HepG2 (cell line): ENCODE measurements at regions of chr6 and their contacts with region 1.

Region 1: GRCh38 chr6:13328076-13328874 is at the start of gene TBC1D7:
- DNase-seq: peak; percentile 92
- ATAC-seq: peak; percentile 92
- H3K4me3 ChIP-seq: peak within 1 kb of the TSS; percentile 72 to 92 (median 90)
- H3K27ac ChIP-seq: peak within 1 kb of the TSS; percentile 81
- H3K4me1 ChIP-seq: peaks cover 45% of the 10 kb centered on the region
- H3K27me3 ChIP-seq: peaks cover 0 to 4% of the 10 kb centered on the region in 2 experiments; a peak in 2 of 5 replicates
- CTCF ChIP-seq: peak; percentile 28
- EP300 ChIP-seq: no peak
- POLR2A ChIP-seq: peak; percentile 74 to 94
- RAD21 ChIP-seq: peak; percentile 22; the same call in 1 of the 2 replicates
- total RNA-seq, gene TBC1D7: 23.3 and 28.5 TPM in 2 replicates

Region 2: DNA sequence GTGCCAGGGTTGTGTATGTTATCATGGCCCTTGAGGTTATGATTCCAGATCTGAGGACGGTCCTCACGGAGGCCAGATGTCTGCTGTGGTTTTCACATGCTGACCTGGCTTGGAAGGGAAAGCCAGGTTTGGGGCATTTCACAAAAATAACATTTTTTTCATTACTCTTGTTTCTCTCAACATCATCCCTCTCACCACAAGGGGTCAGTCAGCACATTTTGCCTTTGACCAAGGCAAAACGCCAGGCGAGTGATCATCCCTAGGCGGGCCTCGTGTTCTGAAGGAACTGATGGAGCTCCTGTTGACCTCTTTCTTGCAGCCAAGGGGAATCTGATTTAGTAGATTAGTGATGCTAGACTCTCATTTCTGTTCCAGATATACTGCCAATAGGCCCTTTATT is 133.4 kb before region 1 on chr6:
- CTCF ChIA-PET with region 1: interaction called, 26 read pairs
- POLR2A ChIA-PET with region 1: interaction called, 5 read pairs
- in situ Hi-C with region 1: loop called (anchors 10 kb)
- intact Hi-C with region 1: loop called (anchors 1 kb)
- DNase-seq: peak; percentile 64
- ATAC-seq: peak; percentile 87
- H3K4me3 ChIP-seq: no peak overlapping the region
- H3K27ac ChIP-seq: no peak overlapping the region
- H3K4me1 ChIP-seq: peaks cover 2% of the 10 kb centered on the region; the same call in 1 of the 2 replicates
- H3K27me3 ChIP-seq: 0 out of 5 replicates have a peak, but pooled peaks cover 0 to 12% of the 10 kb centered on the region in 2 experiments
- CTCF ChIP-seq: peak; percentile 79
- EP300 ChIP-seq: no peak
- POLR2A ChIP-seq: no peak
- RAD21 ChIP-seq: peak; percentile 63

Region 3: DNA sequence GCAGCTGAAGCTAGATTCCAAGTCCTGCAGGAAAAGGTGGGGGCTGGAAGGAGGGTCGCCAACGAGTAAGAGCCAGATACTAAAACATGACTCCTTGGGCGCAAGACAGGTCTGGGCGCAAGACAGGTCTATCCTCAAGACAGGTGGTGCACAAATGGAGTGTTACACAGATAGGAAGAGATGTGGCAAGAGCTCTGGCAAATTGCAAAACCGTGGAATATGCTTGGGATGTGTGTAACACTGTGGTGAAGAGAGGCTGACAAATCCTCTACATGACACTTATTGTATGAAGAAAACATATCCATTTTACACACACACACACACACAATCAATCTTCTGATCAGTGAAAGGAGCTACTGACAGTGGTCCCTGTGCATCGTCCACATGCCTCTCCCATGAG is 77.6 kb before region 1 on chr6:
- CTCF ChIA-PET with region 1: no interaction called
- POLR2A ChIA-PET with region 1: interaction called, 6 read pairs
- in situ Hi-C with region 1: no loop called
- intact Hi-C with region 1: loop called (anchors 2 kb)
- DNase-seq: no peak
- ATAC-seq: peak; percentile 59
- H3K4me3 ChIP-seq: no peak overlapping the region
- H3K27ac ChIP-seq: no peak overlapping the region
- H3K4me1 ChIP-seq: peaks cover 30% of the 10 kb centered on the region
- H3K27me3 ChIP-seq: no peaks in the 10 kb centered on the region
- CTCF ChIP-seq: no peak
- EP300 ChIP-seq: no peak
- POLR2A ChIP-seq: no peak
- RAD21 ChIP-seq: no peak

Region 4: GRCh38 chr6:13302751-13303667 is 25.3 kb before region 1 on chr6:
- CTCF ChIA-PET with region 1: no interaction called
- POLR2A ChIA-PET with region 1: interaction called, 14 read pairs
- in situ Hi-C with region 1: no loop called
- intact Hi-C with region 1: no loop called
- DNase-seq: peak; percentile 80
- ATAC-seq: peak; percentile 42
- H3K4me3 ChIP-seq: no peak overlapping the region
- H3K27ac ChIP-seq: peak overlapping the region; percentile 44
- H3K4me1 ChIP-seq: peaks cover 45% of the 10 kb centered on the region
- H3K27me3 ChIP-seq: no peaks in the 10 kb centered on the region
- CTCF ChIP-seq: no peak
- EP300 ChIP-seq: peak in 1 of 2 experiments; percentile 50; a peak in 1 of 4 replicates
- POLR2A ChIP-seq: no peak
- RAD21 ChIP-seq: no peak

Region 5: DNA sequence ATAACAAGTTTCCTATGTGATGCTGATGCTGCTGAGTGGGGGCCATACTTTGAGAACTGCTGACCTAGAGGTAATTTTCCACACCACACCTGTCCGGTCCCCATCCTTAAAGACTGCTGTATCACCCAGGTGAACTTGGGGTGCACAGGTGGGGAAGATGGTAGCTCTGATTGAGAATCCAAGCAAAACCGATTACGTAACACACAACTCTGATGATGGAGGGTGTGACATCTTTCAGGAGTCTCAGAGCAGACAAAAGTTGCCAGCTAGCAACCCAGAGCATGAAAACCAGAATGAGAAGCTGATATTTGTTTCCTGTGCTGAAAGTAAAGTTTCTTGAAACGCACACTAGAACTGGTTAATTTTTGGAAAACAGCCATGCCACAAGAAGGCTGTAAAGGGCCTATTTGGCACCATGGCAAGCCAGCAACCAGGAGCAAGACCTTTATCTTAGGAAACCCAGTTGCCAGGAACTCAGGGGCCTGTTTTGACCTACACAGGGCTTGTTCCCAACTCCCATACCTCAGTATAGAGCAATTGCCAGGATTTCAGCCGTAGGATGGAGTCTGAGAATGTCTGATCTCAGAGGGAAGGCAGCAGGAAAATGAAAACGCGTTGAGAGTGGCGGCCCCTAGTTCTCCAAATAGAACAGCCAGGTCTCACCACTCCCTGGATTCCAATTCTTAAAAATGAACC is 21.7 kb after region 1 on chr6:
- CTCF ChIA-PET with region 1: no interaction called
- POLR2A ChIA-PET with region 1: no interaction called
- in situ Hi-C with region 1: no loop called
- intact Hi-C with region 1: no loop called
- DNase-seq: no peak
- ATAC-seq: no peak
- H3K4me3 ChIP-seq: no peak overlapping the region
- H3K27ac ChIP-seq: no peak overlapping the region
- H3K4me1 ChIP-seq: peaks cover 9% of the 10 kb centered on the region
- H3K27me3 ChIP-seq: no peaks in the 10 kb centered on the region; a peak in 1 of 5 replicates
- CTCF ChIP-seq: no peak
- EP300 ChIP-seq: no peak
- POLR2A ChIP-seq: no peak
- RAD21 ChIP-seq: no peak

Region 6: DNA sequence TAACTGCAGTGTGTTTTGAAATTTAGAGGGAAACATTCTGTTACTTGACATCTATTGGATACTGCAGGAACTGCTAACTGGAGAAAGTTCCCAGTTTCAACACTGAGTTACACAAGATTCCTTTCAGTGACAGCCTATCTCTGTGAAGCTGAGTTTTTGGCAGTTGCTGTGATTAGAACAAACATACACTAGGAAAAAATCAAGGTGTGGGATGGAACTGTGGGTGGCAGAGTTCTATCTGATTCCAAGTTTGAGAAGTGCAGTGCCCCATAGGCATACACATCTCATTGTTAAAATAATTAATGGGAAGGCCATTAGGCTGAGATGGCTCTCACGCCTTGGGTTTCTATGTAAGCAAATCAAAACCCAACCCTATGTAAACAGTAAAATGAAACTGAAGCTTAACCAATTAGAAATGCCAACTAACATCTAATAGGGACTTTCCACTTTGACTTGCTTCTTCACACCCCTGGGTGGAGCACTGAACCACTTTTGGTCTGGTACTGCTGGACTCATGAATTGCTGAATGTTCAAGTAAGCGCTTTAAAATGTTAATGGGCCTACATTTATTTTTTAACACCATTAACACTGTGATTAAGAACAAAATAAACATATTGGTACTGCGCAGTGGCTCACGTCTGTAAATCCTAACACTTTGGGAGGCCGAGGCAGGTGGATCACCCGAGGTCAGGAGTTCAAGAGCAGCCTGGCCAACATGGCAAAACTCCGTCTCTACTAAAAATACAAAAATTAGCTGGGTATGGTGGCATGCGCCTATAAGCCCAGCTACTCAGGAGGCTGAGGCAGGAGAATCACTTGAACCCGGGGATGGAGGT is 55.3 kb after region 1 on chr6:
- CTCF ChIA-PET with region 1: no interaction called
- POLR2A ChIA-PET with region 1: no interaction called
- in situ Hi-C with region 1: no loop called
- intact Hi-C with region 1: no loop called
- DNase-seq: peak; percentile 21
- ATAC-seq: peak; percentile 56; the same call in 2 of the 3 replicates
- H3K4me3 ChIP-seq: no peak overlapping the region
- H3K27ac ChIP-seq: no peak overlapping the region
- H3K4me1 ChIP-seq: peaks cover 7% of the 10 kb centered on the region
- H3K27me3 ChIP-seq: no peaks in the 10 kb centered on the region
- CTCF ChIP-seq: peak; percentile 38
- EP300 ChIP-seq: no peak
- POLR2A ChIP-seq: no peak
- RAD21 ChIP-seq: no peak

Region 7: GRCh38 chr6:13413900-13414555 is 85.8 kb after region 1 on chr6:
- CTCF ChIA-PET with region 1: no interaction called
- POLR2A ChIA-PET with region 1: interaction called, 11 read pairs
- in situ Hi-C with region 1: no loop called
- intact Hi-C with region 1: no loop called
- DNase-seq: no peak
- ATAC-seq: no peak; the same call in 2 of the 3 replicates
- H3K4me3 ChIP-seq: peak overlapping the region in 1 of 3 experiments; percentile 45; a peak in 1 of 6 replicates
- H3K27ac ChIP-seq: peak overlapping the region; percentile 58
- H3K4me1 ChIP-seq: peaks cover 80% of the 10 kb centered on the region
- H3K27me3 ChIP-seq: no peaks in the 10 kb centered on the region
- CTCF ChIP-seq: no peak
- EP300 ChIP-seq: no peak; a peak in 1 of 4 replicates
- POLR2A ChIP-seq: no peak
- RAD21 ChIP-seq: no peak

Region 8: GRCh38 chr6:13604546-13605416 is 276.5 kb after region 1 on chr6:
- CTCF ChIA-PET with region 1: no interaction called
- POLR2A ChIA-PET with region 1: interaction called, 10 read pairs
- in situ Hi-C with region 1: no loop called
- intact Hi-C with region 1: no loop called
- DNase-seq: peak; percentile 100
- ATAC-seq: peak; percentile 94
- H3K4me3 ChIP-seq: peak overlapping the region in 2 of 3 experiments; percentile 32 to 46; a peak in 2 of 6 replicates
- H3K27ac ChIP-seq: peak overlapping the region; percentile 87
- H3K4me1 ChIP-seq: peaks cover 44% of the 10 kb centered on the region
- H3K27me3 ChIP-seq: no peaks in the 10 kb centered on the region
- CTCF ChIP-seq: no peak
- EP300 ChIP-seq: peak; percentile 97 to 99
- POLR2A ChIP-seq: peak in 1 of 2 experiments; percentile 46; a peak in 1 of 4 replicates
- RAD21 ChIP-seq: peak; percentile 9; the same call in 1 of the 2 replicates